ENCODE measurements at regions of chr1 and their contacts with region 1.

Region 1: DNA sequence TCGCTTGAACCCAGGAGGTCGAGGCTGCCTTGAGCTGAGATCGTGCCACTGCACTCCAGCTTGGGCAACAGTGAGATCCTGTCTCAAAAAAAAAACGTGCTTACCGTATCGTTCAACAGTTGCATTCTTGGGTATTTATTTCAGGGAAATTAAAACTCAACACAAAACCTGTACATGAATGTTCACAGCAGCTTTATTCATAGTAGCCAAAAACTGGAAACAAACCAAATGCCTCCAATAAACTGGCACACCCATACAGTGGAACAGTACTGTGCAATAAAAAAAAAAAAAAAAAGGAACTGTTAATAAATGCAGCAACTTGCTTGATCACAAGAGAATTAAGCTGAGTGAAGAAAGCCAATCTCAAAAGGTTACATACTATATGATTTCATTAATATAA is 6.7 kb downstream of the KHDRBS1 start:
- DNase-seq: no peak
- H3K4me3 ChIP-seq: peak overlapping the region in 1 of 4 donors; percentile 15
- H3K27ac ChIP-seq: peak overlapping the region; percentile 58 to 72 (median 68)
- H3K4me1 ChIP-seq: peaks cover 35 to 96% (median 72%) of the 10 kb centered on the region in 4 donors
- H3K27me3 ChIP-seq: no peaks in the 10 kb centered on the region
- CTCF ChIP-seq: no peak
- EP300 ChIP-seq: no peak
- POLR2A ChIP-seq: no peak

Region 2: GRCh38 chr1:32063261-32063681 is 42.9 kb after region 1 on chr1:
- in situ Hi-C with region 1: no loop called
- intact Hi-C with region 1: loop called (anchors 2 kb)
- DNase-seq: no peak
- H3K4me3 ChIP-seq: no peak overlapping the region
- H3K27ac ChIP-seq: peak overlapping the region; percentile 28 to 58 (median 38)
- H3K4me1 ChIP-seq: peaks cover 0 to 27% (median 14%) of the 10 kb centered on the region in 4 donors
- H3K27me3 ChIP-seq: no peaks in the 10 kb centered on the region
- CTCF ChIP-seq: peak; percentile 50 to 72 (median 60)
- EP300 ChIP-seq: no peak
- POLR2A ChIP-seq: no peak

Measured in transverse colon (tissue), 4 donors.